ENCODE measurements at regions of chr1 and their contacts with region 1.

Region 1: DNA sequence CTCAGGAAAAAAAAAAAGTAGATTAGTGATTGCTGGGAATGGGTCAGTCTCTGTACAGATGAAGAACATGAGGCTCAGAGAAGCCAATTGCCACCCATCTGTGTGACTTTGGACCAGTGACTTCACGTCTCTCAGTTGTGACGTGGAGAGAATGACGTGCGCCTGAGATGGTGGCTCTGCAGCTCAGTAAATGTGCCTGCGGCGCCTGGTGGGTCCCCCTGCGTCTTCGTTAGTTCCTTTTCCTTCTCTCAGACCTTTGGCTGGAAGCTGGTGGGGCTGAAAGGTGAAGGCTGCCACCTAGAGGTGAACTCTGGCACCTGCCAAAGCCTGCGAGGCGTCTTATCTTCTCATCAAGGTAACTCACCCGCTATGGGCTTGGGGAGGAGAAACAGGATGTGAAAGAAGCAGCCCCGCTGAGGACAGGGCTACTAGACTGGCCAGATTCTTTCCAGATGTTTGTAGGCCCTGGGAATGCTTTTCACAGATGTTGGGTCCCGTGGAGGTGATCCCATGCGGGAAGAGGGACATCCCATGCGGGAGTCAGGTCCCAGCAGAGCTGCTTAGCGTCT is 8.7 kb upstream of the E2F2 start:
- DNase-seq: peak; percentile 69
- H3K4me3 ChIP-seq: no peak overlapping the region
- H3K27me3 ChIP-seq: no peaks in the 10 kb centered on the region
- CTCF ChIP-seq: peak; percentile 93

Region 2: GRCh38 chr1:23466423-23466989 is 73.3 kb before region 1 on chr1:
- CTCF ChIA-PET with region 1: no interaction called
- POLR2A ChIA-PET with region 1: no interaction called
- DNase-seq: no peak
- H3K4me3 ChIP-seq: no peak overlapping the region
- H3K27me3 ChIP-seq: no peaks in the 10 kb centered on the region
- CTCF ChIP-seq: no peak

Region 3: GRCh38 chr1:23489842-23490241 is 49.9 kb before region 1 on chr1:
- CTCF ChIA-PET with region 1: interaction called, 116 read pairs
- POLR2A ChIA-PET with region 1: no interaction called
- DNase-seq: no peak
- H3K4me3 ChIP-seq: no peak overlapping the region
- H3K27me3 ChIP-seq: peaks cover 8% of the 10 kb centered on the region
- CTCF ChIP-seq: no peak

Region 4: GRCh38 chr1:23515905-23516304 is 23.9 kb before region 1 on chr1:
- CTCF ChIA-PET with region 1: no interaction called
- POLR2A ChIA-PET with region 1: no interaction called
- DNase-seq: no peak
- H3K4me3 ChIP-seq: no peak overlapping the region
- H3K27me3 ChIP-seq: no peaks in the 10 kb centered on the region
- CTCF ChIP-seq: no peak

Region 5: DNA sequence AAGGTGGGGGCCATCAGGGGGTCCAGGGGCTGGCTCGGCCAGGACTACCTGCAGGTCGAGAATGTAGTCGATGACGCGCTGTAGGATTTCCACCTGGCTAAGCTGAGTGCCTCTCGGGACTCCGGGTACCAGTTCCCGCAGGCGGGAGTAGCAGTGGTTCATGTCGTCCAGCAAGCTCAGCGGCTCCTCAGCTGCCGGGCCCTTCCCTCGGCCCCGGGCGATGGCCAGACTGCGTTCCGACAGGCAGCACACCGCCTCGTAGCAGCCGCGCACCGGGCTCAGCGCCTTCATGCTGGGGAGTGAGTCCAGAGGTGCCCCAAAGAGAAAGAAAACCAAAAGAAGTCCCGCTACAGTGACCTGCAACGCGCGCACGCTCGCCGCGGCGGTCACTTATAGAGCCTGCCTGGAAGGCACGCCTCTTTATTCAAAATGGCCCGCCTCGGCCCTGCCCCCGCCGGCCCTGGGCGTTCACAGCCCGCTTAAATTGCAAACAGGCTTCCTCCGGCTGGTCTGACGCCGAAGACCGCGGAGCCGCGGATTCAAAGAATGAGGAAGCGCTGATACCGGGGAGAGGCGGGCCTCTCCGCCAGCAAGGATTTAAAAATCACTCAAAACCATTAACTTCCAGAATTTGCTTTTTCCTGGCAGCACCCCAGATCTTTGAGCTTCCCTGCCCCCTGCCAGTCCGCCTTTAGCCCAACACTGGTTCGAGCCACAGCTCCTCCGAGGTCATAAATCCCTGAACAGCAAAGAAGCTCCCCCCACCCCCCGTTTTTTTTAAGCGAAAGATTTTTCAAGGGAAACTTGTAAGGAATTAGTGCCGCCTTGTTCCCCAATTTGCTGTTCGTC is 19.6 kb after region 1 on chr1 and contains the start of gene ID3:
- CTCF ChIA-PET with region 1: interaction called, 30 read pairs
- POLR2A ChIA-PET with region 1: no interaction called
- DNase-seq: peak; percentile 94
- H3K4me3 ChIP-seq: peak within 1 kb of the TSS; percentile 76
- H3K27me3 ChIP-seq: no peaks in the 10 kb centered on the region
- CTCF ChIP-seq: no peak
- polyA plus RNA-seq, gene ID3: 230 and 379 TPM in 2 replicates